WTC11 (cell line): ENCODE measurements at regions of chr12 and their contacts with region 1.

Region 1: GRCh38 chr12:2884810-2885209 is 5.9 kb upstream of the TULP3 start:
- DNase-seq: no peak
- ATAC-seq: no peak
- H3K4me3 Mint-ChIP-seq: no peak overlapping the region
- H3K27ac Mint-ChIP-seq: peak overlapping the region; percentile 91
- H3K4me1 Mint-ChIP-seq: peaks cover 12% of the 10 kb centered on the region
- H3K27me3 Mint-ChIP-seq: no peaks in the 10 kb centered on the region
- CTCF ChIP-seq: no peak

Region 2: DNA sequence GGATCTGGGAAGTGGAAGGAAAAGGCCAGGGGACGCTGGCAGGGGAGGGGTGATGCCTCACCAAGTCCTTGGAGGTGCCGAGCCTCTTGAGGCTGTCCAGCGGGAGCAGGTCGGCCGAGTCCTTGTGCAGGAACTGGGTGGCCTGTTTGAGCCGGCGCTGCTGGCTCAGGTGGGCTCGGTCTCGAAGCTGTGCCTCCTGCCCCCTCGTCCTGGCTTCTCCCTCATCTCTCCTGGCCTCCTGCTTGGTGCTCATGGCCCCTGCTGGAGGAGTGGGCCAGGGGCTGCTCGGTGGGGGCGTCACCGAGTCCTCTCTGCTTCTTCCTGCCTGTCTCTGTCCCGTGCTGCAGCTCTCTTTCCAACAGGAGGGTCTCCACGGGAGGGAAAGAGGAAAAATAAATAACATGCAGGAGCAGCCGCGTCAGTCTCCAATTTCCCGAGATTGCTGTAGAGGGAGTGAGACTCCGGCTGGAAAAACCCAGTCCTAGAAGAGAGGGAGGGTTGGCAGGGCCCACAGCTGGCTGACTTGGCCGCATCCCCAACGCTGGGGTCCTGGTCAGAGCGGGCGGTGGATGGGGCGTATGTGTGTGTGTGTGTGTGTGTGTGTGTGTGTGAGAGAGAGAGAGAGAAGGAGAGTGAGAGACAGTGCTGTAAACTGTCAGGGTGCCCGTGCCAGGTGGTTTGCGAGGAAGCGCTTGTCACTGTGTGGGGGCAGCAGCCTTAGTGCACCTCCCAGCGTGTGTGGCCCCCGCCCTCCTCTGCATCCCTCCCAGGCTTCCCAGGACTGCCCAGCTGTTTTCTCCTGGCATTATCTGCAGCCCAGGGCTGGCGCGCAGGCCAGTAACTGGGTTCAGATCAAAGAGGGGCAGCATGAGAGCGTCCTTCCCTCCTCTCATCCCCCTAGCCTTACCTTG is 50.0 kb before region 1 on chr12 and contains the start of gene NRIP2:
- CTCF ChIA-PET with region 1: interaction called, 12 read pairs
- POLR2A ChIA-PET with region 1: interaction called, 4 read pairs
- DNase-seq: peak; percentile 51
- ATAC-seq: peak; percentile 67
- H3K4me3 Mint-ChIP-seq: peak within 1 kb of the TSS; percentile 24
- H3K27ac Mint-ChIP-seq: no peak within 1 kb of the TSS
- H3K4me1 Mint-ChIP-seq: peaks cover 16% of the 10 kb centered on the region
- H3K27me3 Mint-ChIP-seq: no peaks in the 10 kb centered on the region; the same call in none of the 2 replicates
- CTCF ChIP-seq: no peak
- total RNA-seq, gene NRIP2: 0.09 TPM in 1 of 3 replicates, not detected in the others

Region 3: DNA sequence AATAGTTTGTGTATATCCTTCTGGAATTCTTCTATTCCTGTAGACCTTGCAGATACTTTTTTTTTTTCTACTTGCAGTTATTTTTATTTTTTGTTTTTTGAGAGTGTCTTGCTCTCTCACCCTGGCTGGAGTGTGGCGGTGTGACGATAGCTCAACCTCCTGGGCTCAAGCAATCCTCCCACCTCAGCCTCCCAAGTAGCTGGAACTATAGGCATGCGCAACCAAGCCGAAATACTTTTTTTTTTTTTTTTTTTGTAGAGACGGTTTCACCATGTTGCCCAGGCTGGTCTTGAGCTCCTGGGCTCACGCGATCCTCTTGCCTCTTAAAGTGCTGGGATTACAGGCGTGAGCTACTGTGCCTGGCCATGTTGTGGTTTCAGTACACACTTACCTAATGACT is 15.8 kb after region 1 on chr12:
- CTCF ChIA-PET with region 1: interaction called, 13 read pairs
- POLR2A ChIA-PET with region 1: interaction called, 10 read pairs
- DNase-seq: no peak
- ATAC-seq: peak; percentile 26; the same call in 1 of the 2 replicates
- H3K4me3 Mint-ChIP-seq: no peak overlapping the region
- H3K27ac Mint-ChIP-seq: no peak overlapping the region; the same call in 1 of the 2 replicates
- H3K4me1 Mint-ChIP-seq: peaks cover 3% of the 10 kb centered on the region; the same call in 1 of the 2 replicates
- H3K27me3 Mint-ChIP-seq: no peaks in the 10 kb centered on the region
- CTCF ChIP-seq: no peak